ENCODE measurements at regions of chr6 and their contacts with region 1.

Region 1: DNA sequence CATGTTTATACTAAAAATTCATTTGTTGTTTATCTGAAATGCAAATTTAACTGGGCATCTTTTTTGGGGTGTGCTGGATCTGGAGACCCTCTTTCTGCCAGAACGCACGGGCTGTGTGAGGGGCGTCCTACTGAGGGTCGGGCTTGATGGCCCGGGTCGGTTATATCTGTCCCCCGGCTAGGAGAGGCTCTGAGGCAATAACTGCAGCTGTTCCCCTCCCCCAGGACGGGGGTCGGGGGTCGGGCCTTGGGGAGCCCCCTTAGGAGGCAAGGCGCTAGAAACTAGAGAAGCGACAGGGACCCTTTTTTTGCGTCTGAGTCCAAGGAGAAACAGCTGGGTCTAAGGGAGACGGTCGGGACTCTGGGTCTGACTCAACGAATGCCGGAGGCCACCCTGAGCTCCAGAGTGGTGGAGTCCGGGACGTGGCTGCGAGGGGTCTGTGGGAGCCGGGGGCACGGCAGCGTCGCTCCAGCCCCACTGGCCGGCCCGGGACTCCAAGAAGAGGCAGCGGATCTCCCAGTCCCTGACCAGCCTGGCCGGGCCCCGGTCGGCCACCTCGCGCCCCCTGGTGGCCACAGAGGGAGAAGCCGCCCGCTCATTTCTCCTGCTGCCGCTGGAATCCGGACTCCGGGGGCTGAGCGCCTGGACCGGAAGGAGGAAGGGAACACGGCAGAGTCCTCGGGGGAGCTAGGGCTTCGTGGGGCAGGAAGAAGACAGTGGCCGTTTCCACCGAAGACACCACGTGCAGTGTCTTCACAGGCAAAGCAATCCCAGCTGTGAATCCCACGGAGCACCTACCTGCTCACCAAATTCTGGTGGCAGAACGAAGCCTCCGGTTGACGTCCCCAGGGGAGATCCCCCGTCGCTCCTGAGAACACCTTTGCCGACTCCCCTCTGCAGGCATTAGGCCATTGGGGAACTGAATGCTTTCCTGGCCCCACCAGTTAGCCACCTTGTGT is 24.0 kb upstream of the SCML4 start:
- DNase-seq: peak; percentile 80 to 88
- ATAC-seq: peak; percentile 90 to 98 (median 96)
- H3K4me3 ChIP-seq: peak overlapping the region; percentile 4 to 55 (median 46)
- H3K27ac ChIP-seq: peak overlapping the region in 1 of 10 donors; percentile 47
- H3K4me1 ChIP-seq: peaks cover 0 to 14% (median 10%) of the 10 kb centered on the region in 9 donors
- H3K27me3 ChIP-seq: peaks cover 0 to 23% (median 17%) of the 10 kb centered on the region in 7 donors
- CTCF ChIP-seq: peak; percentile 92 to 99 (median 97)

Region 2: GRCh38 chr6:107132330-107132954 is 715.7 kb before region 1 on chr6:
- intact Hi-C with region 1: loop called in 1 of 10 experiments (anchors 5 kb)
- DNase-seq: no peak
- ATAC-seq: no peak
- H3K4me3 ChIP-seq: no peak overlapping the region
- H3K27ac ChIP-seq: no peak overlapping the region
- H3K4me1 ChIP-seq: peaks cover 0 to 13% (median 4%) of the 10 kb centered on the region in 9 donors
- H3K27me3 ChIP-seq: no peaks in the 10 kb centered on the region
- CTCF ChIP-seq: peak in 8 of 9 donors; percentile 31 to 60 (median 48)

Region 3: GRCh38 chr6:107674995-107675738 is 173.0 kb before region 1 on chr6:
- intact Hi-C with region 1: loop called (anchors 1 to 10 kb)
- DNase-seq: peak; percentile 88 to 89
- ATAC-seq: peak; percentile 85 to 96 (median 92)
- H3K4me3 ChIP-seq: peak overlapping the region in 7 of 10 donors; percentile 19 to 43 (median 28)
- H3K27ac ChIP-seq: peak overlapping the region in 2 of 10 donors; percentile 23 to 45
- H3K4me1 ChIP-seq: peaks cover 7 to 31% (median 19%) of the 10 kb centered on the region in 9 donors
- H3K27me3 ChIP-seq: no peaks in the 10 kb centered on the region
- CTCF ChIP-seq: peak; percentile 87 to 95 (median 92)

Region 4: DNA sequence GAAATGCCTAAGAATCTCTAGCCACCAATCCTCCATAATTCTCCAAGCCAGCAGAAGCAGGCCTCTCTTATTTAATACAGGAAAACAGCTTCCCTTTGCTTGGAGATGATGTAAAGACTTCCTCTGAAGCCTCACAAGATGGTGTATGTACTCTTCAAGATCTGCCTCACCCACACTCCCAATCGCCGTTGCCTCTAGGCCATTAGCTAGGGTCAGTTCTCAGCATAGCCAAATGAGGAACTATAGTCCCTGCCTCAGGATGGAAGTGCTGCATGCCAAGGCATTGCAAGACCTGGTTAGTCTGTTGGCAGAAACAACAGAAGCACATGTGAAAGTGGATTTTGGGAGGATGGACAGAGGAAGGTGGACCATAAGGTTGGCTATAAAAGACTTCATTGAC is 163.1 kb before region 1 on chr6:
- intact Hi-C with region 1: loop called in 1 of 10 experiments (anchors 5 kb)
- DNase-seq: no peak
- ATAC-seq: no peak
- H3K4me3 ChIP-seq: no peak overlapping the region
- H3K27ac ChIP-seq: no peak overlapping the region
- H3K4me1 ChIP-seq: peaks cover 0 to 8% (median 0%) of the 10 kb centered on the region in 9 donors
- H3K27me3 ChIP-seq: no peaks in the 10 kb centered on the region
- CTCF ChIP-seq: no peak

Region 5: DNA sequence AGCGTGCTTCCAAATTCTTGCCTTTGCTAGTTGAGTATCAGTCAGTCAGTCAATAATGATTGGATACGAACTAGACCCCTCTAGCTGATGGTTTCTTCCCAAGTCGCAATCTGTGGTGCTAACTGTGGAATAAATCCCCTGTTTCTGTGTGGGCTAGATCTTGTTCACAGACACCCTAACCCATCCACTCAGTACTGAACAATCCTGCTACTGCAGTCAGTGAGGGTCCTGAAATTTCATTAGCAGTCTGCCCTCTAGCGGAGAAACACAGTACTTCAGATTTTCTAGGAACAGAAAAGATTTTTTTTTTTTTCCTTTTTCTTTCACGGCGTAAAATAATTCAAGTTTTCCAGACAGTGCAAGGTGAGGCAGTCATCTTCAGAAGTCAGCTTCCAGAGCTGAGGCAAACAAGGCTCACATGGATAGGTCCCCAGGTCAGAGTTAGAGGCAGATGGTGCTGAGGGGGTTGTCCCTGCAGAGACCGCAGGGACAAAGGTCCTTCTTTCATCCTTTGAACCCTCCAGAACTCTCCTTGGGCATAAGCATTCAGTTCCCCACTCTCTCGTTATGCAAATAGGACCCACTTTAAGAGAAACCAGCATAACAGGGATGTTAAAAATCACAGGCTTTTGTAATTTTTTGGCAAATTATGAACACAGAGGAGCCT is 143.6 kb before region 1 on chr6:
- intact Hi-C with region 1: loop called in 2 of 10 experiments (anchors 10 kb)
- DNase-seq: peak in 1 of 2 donors; percentile 49
- ATAC-seq: peak in 6 of 8 donors; percentile 52 to 73 (median 62)
- H3K4me3 ChIP-seq: peak overlapping the region in 2 of 10 donors; percentile 6 to 19
- H3K27ac ChIP-seq: no peak overlapping the region
- H3K4me1 ChIP-seq: peaks cover 0 to 4% (median 0%) of the 10 kb centered on the region in 9 donors
- H3K27me3 ChIP-seq: peaks cover 0 to 3% (median 0%) of the 10 kb centered on the region in 7 donors
- CTCF ChIP-seq: peak; percentile 78 to 89 (median 84)

Region 6: GRCh38 chr6:107870381-107870780 is 22.3 kb after region 1 on chr6:
- intact Hi-C with region 1: no loop called
- DNase-seq: no peak
- ATAC-seq: no peak
- H3K4me3 ChIP-seq: no peak overlapping the region
- H3K27ac ChIP-seq: no peak overlapping the region
- H3K4me1 ChIP-seq: peaks cover 0 to 13% (median 0%) of the 10 kb centered on the region in 9 donors
- H3K27me3 ChIP-seq: no peaks in the 10 kb centered on the region
- CTCF ChIP-seq: no peak

Measured in heart right ventricle (tissue), 16 donors.